ENCODE measurements at regions of chr14 and their contacts with region 1.

Region 1: GRCh38 chr14:60232185-60232584 is 16.8 kb upstream of the PPM1A start:
- DNase-seq: no peak
- ATAC-seq: no peak
- H3K4me3 ChIP-seq: no peak overlapping the region
- H3K4me3 Mint-ChIP-seq: no peak overlapping the region
- H3K27ac ChIP-seq: no peak overlapping the region
- H3K27ac Mint-ChIP-seq: no peak overlapping the region
- H3K4me1 ChIP-seq: no peaks in the 10 kb centered on the region
- H3K4me1 Mint-ChIP-seq: no peaks in the 10 kb centered on the region
- H3K27me3 ChIP-seq: no peaks in the 10 kb centered on the region
- H3K27me3 Mint-ChIP-seq: peaks cover 0 to 18% (median 0%) of the 10 kb centered on the region in 5 donors

Region 2: GRCh38 chr14:60134702-60135101 is 97.5 kb before region 1 on chr14:
- CTCF ChIA-PET with region 1: no interaction called
- POLR2A ChIA-PET with region 1: no interaction called
- intact Hi-C with region 1: no loop called
- DNase-seq: no peak
- ATAC-seq: no peak
- H3K4me3 ChIP-seq: no peak overlapping the region
- H3K4me3 Mint-ChIP-seq: no peak overlapping the region
- H3K27ac ChIP-seq: no peak overlapping the region
- H3K27ac Mint-ChIP-seq: no peak overlapping the region
- H3K4me1 ChIP-seq: no peaks in the 10 kb centered on the region
- H3K4me1 Mint-ChIP-seq: peaks cover 0 to 11% (median 0%) of the 10 kb centered on the region in 7 donors
- H3K27me3 ChIP-seq: no peaks in the 10 kb centered on the region
- H3K27me3 Mint-ChIP-seq: no peaks in the 10 kb centered on the region

Region 3: GRCh38 chr14:60214003-60214402 is 18.2 kb before region 1 on chr14:
- CTCF ChIA-PET with region 1: no interaction called
- POLR2A ChIA-PET with region 1: no interaction called
- intact Hi-C with region 1: loop called in 1 of 2 experiments (anchors 1 kb)
- DNase-seq: no peak
- ATAC-seq: no peak
- H3K4me3 ChIP-seq: no peak overlapping the region
- H3K4me3 Mint-ChIP-seq: no peak overlapping the region
- H3K27ac ChIP-seq: no peak overlapping the region
- H3K27ac Mint-ChIP-seq: no peak overlapping the region
- H3K4me1 ChIP-seq: no peaks in the 10 kb centered on the region
- H3K4me1 Mint-ChIP-seq: no peaks in the 10 kb centered on the region
- H3K27me3 ChIP-seq: no peaks in the 10 kb centered on the region
- H3K27me3 Mint-ChIP-seq: peaks cover 0 to 13% (median 8%) of the 10 kb centered on the region in 5 donors

Measured in naive thymus-derived CD4-positive, alpha-beta T cell (primary cell).